ENCODE measurements at regions of chr6 and their contacts with region 1.

Region 1: DNA sequence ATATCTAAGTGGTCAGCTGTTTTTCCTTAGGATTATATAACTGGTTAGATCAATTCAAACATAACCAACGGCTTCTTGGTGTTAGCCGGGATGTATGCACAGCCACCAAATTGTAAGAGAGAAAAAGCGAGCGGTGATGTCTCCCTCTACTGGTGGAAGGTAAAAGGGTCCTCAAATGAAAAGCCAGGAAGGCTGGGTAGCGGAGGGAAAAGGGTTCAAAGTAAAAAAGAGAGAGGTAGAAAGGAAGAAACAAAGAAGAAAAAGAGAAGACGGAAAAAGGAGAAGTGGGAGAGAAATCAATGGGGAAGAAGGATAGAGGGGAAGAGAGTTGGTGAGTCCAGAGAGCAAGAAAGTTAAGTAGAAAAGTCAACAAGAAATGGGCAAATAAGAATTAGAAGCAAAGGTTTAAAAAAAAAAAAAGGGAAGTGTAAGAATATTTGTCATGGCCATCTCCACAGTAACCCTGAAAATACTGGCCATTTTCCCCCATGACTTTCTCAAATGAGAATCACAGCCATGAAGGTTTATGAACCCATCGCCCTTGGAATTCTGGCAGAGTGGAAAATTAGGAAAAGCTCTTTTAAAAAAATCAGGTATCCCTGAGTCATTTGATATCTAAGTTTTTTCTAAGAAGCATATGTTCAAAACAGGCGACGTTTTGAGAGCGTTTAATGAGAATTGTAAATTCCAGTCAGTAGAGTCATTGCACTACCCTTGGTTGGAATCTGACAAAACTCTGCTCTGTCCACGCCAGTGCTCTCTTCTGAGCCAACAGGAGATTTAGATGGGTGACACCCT is 155.6 kb upstream of the SNX9 start:
- DNase-seq: peak; percentile 80
- H3K4me3 Mint-ChIP-seq: peak overlapping the region; percentile 1
- H3K27ac Mint-ChIP-seq: peak overlapping the region; percentile 78
- H3K4me1 Mint-ChIP-seq: peaks cover 22% of the 10 kb centered on the region
- H3K27me3 Mint-ChIP-seq: no peaks in the 10 kb centered on the region
- CTCF ChIP-seq: peak; percentile 78

Region 2: DNA sequence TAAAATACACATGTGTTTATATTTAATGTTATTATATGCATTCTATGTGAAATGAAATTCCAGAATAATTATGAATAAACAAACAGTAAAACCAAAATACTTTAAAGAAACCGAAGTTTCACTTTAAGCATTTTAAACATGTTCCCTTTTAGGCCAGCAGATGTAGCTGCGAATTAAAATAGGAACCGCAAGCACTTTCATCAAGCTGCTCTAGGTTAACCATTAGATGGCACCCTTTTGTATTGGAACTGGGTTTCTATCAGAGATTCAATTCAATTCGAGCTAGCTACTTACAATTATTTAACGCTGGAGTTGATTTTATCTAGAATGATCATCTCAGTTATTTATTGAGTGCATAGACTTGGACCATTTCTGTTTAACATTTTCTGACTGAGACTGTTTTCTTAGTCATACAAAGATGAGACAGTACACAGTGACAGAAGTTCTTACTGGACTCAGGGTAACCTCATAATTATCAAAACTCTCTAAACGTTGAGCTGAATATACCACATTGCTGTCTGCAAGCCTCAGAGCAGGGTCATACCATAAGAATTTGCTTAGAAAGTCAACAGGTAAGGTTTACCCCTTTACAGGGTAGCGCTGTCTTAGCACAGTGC is 352.6 kb before region 1 on chr6:
- CTCF ChIA-PET with region 1: interaction called, 106 read pairs
- POLR2A ChIA-PET with region 1: interaction called, 7 read pairs
- intact Hi-C with region 1: loop called (anchors 1 kb)
- DNase-seq: peak; percentile 76
- H3K4me3 Mint-ChIP-seq: no peak overlapping the region
- H3K27ac Mint-ChIP-seq: no peak overlapping the region
- H3K4me1 Mint-ChIP-seq: peaks cover 12% of the 10 kb centered on the region
- H3K27me3 Mint-ChIP-seq: no peaks in the 10 kb centered on the region
- CTCF ChIP-seq: peak; percentile 79

Region 3: GRCh38 chr6:157379656-157380454 is 287.6 kb before region 1 on chr6:
- CTCF ChIA-PET with region 1: interaction called, 10 read pairs
- POLR2A ChIA-PET with region 1: no interaction called
- intact Hi-C with region 1: loop called (anchors 1 kb)
- DNase-seq: peak; percentile 93
- H3K4me3 Mint-ChIP-seq: peak overlapping the region; percentile 87
- H3K27ac Mint-ChIP-seq: no peak overlapping the region
- H3K4me1 Mint-ChIP-seq: peaks cover 21% of the 10 kb centered on the region
- H3K27me3 Mint-ChIP-seq: no peaks in the 10 kb centered on the region
- CTCF ChIP-seq: no peak

Region 4: DNA sequence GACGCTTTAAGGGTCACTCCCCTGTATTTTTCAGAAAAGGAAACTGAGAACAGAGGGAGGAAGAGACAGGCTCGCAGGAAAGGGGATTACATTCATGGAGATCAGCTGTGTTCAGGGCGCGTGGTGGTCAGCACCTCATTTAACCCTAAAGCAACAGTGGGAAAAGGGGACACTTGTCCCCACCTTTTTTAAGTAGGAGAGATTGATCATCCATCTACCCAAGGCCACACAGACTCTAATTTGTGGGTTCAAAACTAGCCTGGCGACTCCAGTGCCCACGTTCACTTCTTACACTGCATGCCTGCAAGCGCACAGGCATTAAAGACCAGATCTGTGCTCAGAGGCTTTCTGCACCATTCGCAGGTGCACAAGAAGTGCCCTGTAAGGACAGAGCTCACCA is 12.3 kb before region 1 on chr6:
- CTCF ChIA-PET with region 1: interaction called, 10 read pairs
- POLR2A ChIA-PET with region 1: no interaction called
- intact Hi-C with region 1: no loop called
- DNase-seq: no peak
- H3K4me3 Mint-ChIP-seq: no peak overlapping the region
- H3K27ac Mint-ChIP-seq: no peak overlapping the region
- H3K4me1 Mint-ChIP-seq: no peaks in the 10 kb centered on the region
- H3K27me3 Mint-ChIP-seq: no peaks in the 10 kb centered on the region
- CTCF ChIP-seq: no peak

Region 5: DNA sequence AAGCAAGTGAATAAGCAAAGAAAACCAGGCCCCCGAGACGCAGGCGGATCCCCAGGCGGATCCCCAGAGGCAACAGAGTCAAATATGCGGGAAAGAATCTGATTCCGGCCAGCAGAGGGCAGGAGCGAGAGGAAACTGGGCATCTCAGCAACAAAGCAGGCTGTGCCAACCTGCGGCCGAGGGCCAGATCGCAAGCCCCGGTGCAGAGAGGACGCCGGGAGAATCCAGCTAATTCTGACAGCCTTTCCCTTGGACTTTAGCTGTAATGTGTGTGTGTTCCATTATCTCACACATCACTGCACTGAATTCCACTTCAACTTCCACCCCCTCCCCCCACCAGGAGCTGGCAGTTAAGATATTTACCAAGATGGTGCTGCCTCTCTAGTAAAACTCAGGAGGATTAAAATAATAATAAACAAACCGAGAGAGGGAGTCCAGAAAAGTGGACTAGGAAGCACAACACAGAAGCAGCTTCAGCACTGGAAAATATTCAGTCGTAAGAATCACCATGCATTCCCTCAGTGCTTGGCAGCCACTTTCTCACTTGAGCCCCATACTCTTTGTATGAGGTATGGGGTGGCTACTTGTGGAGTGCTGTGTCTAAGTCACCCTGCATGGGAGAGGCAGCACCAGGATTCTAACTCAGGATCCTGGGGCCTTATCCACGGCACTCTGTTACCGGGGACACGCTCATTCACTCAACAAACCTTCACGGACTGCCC is 89.5 kb after region 1 on chr6:
- CTCF ChIA-PET with region 1: interaction called, 107 read pairs
- POLR2A ChIA-PET with region 1: no interaction called
- intact Hi-C with region 1: loop called (anchors 2 kb)
- DNase-seq: peak; percentile 87
- H3K4me3 Mint-ChIP-seq: no peak overlapping the region
- H3K27ac Mint-ChIP-seq: no peak overlapping the region
- H3K4me1 Mint-ChIP-seq: peaks cover 51% of the 10 kb centered on the region
- H3K27me3 Mint-ChIP-seq: no peaks in the 10 kb centered on the region
- CTCF ChIP-seq: peak; percentile 73